Transverse colon (tissue), 4 donors: ENCODE measurements at regions of chrX and their contacts with region 1.

Region 1: DNA sequence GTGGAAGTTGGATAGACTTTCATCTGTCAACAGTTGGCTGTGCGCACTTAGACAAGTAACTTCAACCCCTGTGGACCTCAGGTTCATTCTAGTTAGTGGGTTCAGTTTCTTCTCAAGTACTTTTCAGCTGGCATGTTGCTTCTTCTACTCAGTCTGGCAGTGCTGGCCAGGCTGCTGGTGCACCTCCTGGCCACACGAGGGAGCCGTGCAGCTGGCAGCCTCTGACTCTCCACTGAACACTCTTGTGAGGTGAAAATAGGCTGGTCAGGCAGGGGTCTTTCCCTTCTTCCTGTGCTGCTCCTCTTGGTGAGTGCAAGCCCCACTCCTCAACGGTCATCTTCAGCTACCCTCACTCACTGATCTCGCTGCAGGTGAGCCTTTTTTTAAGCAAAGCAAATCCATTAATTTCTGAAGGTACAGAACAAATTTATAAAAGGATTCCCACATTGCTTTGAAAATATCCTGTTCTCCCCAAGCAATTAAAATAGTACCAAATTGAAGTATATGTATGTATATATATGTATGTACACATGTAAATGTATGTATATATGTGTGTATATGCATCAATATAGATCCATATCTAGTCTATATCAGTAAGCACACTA is 30.6 kb downstream of the LONRF3 start:
- DNase-seq: peak; percentile 53
- H3K4me3 ChIP-seq: no peak overlapping the region
- H3K27ac ChIP-seq: no peak overlapping the region
- H3K4me1 ChIP-seq: no peaks in the 10 kb centered on the region
- H3K27me3 ChIP-seq: no peaks in the 10 kb centered on the region
- CTCF ChIP-seq: peak; percentile 46 to 95 (median 69)
- EP300 ChIP-seq: no peak
- POLR2A ChIP-seq: no peak

Region 2: GRCh38 chrX:118839334-118839958 is 165.6 kb before region 1 on chrX:
- in situ Hi-C with region 1: loop called in 3 of 4 experiments (anchors 10 to 25 kb)
- intact Hi-C with region 1: no loop called
- DNase-seq: peak; percentile 80
- H3K4me3 ChIP-seq: peak overlapping the region in 3 of 4 donors; percentile 30 to 56 (median 39)
- H3K27ac ChIP-seq: no peak overlapping the region
- H3K4me1 ChIP-seq: no peaks in the 10 kb centered on the region
- H3K27me3 ChIP-seq: no peaks in the 10 kb centered on the region
- CTCF ChIP-seq: peak; percentile 61 to 79 (median 71)
- EP300 ChIP-seq: no peak
- POLR2A ChIP-seq: no peak

Region 3: DNA sequence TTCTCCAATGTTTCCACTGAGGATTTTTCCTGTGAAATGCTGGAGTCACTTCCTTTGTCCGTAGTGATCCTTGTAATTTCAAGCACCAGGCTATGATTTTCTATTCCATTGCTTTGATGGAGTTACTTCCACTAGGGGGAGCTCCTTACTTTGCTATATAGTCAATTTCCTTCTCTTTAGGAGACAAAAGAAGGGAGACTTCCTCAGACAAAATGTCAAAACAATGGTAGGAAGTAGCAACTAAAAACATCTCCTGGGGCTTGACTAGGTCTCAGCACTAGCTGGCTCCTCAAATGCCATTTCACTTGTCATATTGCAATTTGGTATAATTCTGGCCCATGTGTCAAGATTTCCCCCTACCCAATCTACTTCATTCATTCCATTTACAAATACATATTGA is 157.3 kb before region 1 on chrX:
- in situ Hi-C with region 1: loop called in 3 of 4 experiments (anchors 10 to 25 kb)
- intact Hi-C with region 1: no loop called
- DNase-seq: no peak
- H3K4me3 ChIP-seq: no peak overlapping the region
- H3K27ac ChIP-seq: no peak overlapping the region
- H3K4me1 ChIP-seq: no peaks in the 10 kb centered on the region
- H3K27me3 ChIP-seq: no peaks in the 10 kb centered on the region
- CTCF ChIP-seq: peak; percentile 45 to 64 (median 57)
- EP300 ChIP-seq: no peak
- POLR2A ChIP-seq: no peak

Region 4: DNA sequence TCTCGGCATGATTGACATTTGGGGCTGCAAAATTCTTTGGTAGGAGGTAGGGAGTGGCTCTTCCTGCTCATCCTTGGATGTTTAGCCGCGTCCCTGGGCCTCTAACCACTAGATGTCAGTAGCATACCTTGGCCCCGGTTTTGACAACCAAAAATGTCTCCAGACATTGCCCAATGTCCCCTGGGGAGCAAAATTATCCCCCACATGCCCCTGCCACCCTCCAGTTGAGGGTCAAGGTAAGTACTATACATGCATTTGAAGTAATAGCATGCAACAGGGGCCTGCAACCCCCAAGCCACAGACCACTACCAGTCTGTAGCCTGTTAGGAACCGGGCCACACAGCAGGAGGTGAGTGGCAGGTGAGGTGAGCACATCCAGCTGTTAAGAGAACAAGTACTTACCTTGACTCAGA is 140.2 kb after region 1 on chrX:
- in situ Hi-C with region 1: no loop called
- intact Hi-C with region 1: no loop called
- DNase-seq: peak; percentile 10
- H3K4me3 ChIP-seq: no peak overlapping the region
- H3K27ac ChIP-seq: no peak overlapping the region
- H3K4me1 ChIP-seq: no peaks in the 10 kb centered on the region
- H3K27me3 ChIP-seq: no peaks in the 10 kb centered on the region
- CTCF ChIP-seq: peak in 2 of 5 experiments; percentile 17 to 22
- EP300 ChIP-seq: no peak
- POLR2A ChIP-seq: no peak

Region 5: DNA sequence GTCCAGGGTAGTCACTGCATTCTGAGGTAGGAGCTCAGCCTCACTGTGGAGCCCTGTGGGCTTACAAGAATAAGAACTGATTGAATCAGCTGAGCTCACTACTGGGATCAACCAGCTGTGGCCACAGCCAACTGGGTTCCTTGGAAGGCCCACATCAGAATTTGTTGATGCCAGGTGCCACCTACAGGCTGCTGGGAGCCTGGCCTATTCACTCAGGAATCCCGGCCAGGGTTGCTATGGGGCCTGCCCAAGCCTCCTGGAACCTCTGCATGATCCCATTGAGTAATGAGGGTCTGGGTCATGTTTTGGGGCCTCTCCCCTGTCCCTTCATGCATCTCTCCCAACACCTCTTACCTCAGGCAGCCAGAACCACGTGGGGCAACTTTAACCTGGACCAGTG is 176.5 kb after region 1 on chrX:
- in situ Hi-C with region 1: no loop called
- intact Hi-C with region 1: no loop called
- DNase-seq: peak; percentile 32
- H3K4me3 ChIP-seq: no peak overlapping the region
- H3K27ac ChIP-seq: no peak overlapping the region
- H3K4me1 ChIP-seq: no peaks in the 10 kb centered on the region
- H3K27me3 ChIP-seq: no peaks in the 10 kb centered on the region
- CTCF ChIP-seq: peak in 2 of 5 experiments; percentile 17 to 22
- EP300 ChIP-seq: no peak
- POLR2A ChIP-seq: no peak